ENCODE measurements at regions of chr9 and their contacts with region 1.

Region 1: GRCh38 chr9:128523199-128523925 is 18.8 kb downstream of the GLE1 start:
- DNase-seq: peak; percentile 73
- H3K4me3 ChIP-seq: no peak overlapping the region
- H3K27ac ChIP-seq: peak overlapping the region; percentile 34
- H3K4me1 ChIP-seq: peaks cover 6% of the 10 kb centered on the region
- H3K27me3 ChIP-seq: no peaks in the 10 kb centered on the region
- CTCF ChIP-seq: no peak

Region 2: DNA sequence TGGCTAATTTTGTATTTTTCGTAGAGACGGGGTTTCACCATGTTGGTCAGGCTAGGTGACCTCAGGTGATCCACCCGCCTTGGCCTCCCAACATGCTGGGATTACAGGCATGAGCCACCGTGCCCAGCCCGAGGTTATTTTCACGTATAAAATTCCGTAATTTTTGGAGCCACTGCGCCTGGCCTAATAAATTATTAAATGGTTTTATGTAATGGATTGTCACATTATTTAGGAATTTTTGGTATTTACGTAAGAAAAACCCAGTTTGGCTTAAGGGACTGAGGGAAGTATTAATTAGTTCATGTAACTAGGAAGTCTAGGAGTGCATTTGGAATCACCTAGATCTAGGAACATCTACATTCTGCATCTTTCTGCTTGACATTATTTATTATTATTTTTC is 10.5 kb before region 1 on chr9:
- CTCF ChIA-PET with region 1: no interaction called
- POLR2A ChIA-PET with region 1: no interaction called
- intact Hi-C with region 1: no loop called
- DNase-seq: no peak
- H3K4me3 ChIP-seq: no peak overlapping the region
- H3K27ac ChIP-seq: no peak overlapping the region
- H3K4me1 ChIP-seq: no peaks in the 10 kb centered on the region
- H3K27me3 ChIP-seq: no peaks in the 10 kb centered on the region
- CTCF ChIP-seq: no peak

Region 3: GRCh38 chr9:128875790-128876160 is 352.4 kb after region 1 on chr9:
- CTCF ChIA-PET with region 1: no interaction called
- POLR2A ChIA-PET with region 1: interaction called, 10 read pairs
- intact Hi-C with region 1: no loop called
- DNase-seq: no peak
- H3K4me3 ChIP-seq: no peak overlapping the region
- H3K27ac ChIP-seq: no peak overlapping the region
- H3K4me1 ChIP-seq: peaks cover 9% of the 10 kb centered on the region
- H3K27me3 ChIP-seq: no peaks in the 10 kb centered on the region
- CTCF ChIP-seq: no peak

Region 4: DNA sequence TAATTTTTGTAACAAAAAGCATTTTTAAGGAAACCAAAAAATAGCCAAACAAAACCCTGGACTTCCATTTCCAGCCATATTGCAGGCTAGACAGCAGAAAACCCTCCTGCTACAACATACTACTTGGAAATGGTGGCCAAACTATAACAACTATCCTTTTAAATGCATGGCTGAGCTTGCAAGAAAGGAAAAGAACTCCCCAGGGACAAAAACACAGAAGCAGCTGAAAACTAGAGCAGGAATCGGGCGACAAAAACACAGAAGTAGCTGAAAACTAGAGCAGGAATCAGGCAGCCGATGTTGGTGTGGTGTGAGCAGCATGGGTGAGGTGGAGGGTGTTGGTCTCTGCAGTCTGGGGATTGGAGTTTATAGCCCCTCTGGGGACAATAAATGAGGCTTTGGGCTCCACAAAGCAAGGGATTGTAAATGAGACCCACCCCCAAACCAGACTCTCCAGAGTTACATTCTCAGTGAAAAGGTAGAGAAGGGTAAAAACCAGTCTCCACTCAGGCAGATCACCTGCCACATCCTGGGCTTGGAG is 1002.4 kb after region 1 on chr9:
- CTCF ChIA-PET with region 1: no interaction called
- POLR2A ChIA-PET with region 1: interaction called, 15 read pairs
- intact Hi-C with region 1: no loop called
- DNase-seq: peak; percentile 29
- H3K4me3 ChIP-seq: no peak overlapping the region
- H3K27ac ChIP-seq: no peak overlapping the region
- H3K4me1 ChIP-seq: peaks cover 19% of the 10 kb centered on the region
- H3K27me3 ChIP-seq: no peaks in the 10 kb centered on the region
- CTCF ChIP-seq: no peak